Activated CD8-positive, alpha-beta T cell treated with anti-CD3 and anti-CD28 coated beads for 36 hours (primary cell): ENCODE measurements at regions of chr10 and their contacts with region 1.

Region 1: GRCh38 chr10:44932517-44933450 is 21.6 kb downstream of the TMEM72 start:
- DNase-seq: peak; percentile 93
- ATAC-seq: peak; percentile 98
- H3K4me3 Mint-ChIP-seq: no peak overlapping the region
- H3K27ac Mint-ChIP-seq: no peak overlapping the region
- H3K4me1 Mint-ChIP-seq: peaks cover 6% of the 10 kb centered on the region
- H3K27me3 Mint-ChIP-seq: no peaks in the 10 kb centered on the region
- CTCF ChIP-seq: peak; percentile 92

Region 2: DNA sequence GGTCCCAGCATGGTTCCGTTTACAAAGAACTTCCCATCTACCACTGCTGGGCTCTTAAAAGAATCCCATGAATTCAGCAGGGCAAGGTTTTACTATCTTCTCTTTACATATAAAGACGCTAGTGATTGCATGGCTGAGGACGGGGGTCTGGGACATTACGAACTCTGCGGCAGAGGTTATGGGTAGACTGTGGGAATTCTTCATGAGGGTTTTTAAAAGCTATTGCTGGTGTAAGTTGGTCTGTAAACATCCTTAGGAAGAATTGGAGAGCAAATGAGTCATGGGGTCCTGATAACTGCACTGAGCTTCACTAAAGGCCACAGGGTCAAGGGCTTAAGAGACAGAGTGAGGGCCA is 74.8 kb before region 1 on chr10:
- CTCF ChIA-PET with region 1: no interaction called
- POLR2A ChIA-PET with region 1: no interaction called
- intact Hi-C with region 1: no loop called
- DNase-seq: no peak
- ATAC-seq: no peak
- H3K4me3 Mint-ChIP-seq: no peak overlapping the region
- H3K27ac Mint-ChIP-seq: no peak overlapping the region
- H3K4me1 Mint-ChIP-seq: no peaks in the 10 kb centered on the region
- H3K27me3 Mint-ChIP-seq: peaks cover 4% of the 10 kb centered on the region
- CTCF ChIP-seq: peak; percentile 62

Region 3: GRCh38 chr10:44947371-44948152 is 14.8 kb after region 1 on chr10:
- CTCF ChIA-PET with region 1: interaction called, 20 read pairs
- POLR2A ChIA-PET with region 1: interaction called, 3 read pairs
- intact Hi-C with region 1: no loop called
- DNase-seq: no peak
- ATAC-seq: no peak
- H3K4me3 Mint-ChIP-seq: no peak overlapping the region
- H3K27ac Mint-ChIP-seq: no peak overlapping the region
- H3K4me1 Mint-ChIP-seq: peaks cover 4% of the 10 kb centered on the region
- H3K27me3 Mint-ChIP-seq: peaks cover 9% of the 10 kb centered on the region
- CTCF ChIP-seq: no peak

Region 4: GRCh38 chr10:44952779-44953231 is 20.0 kb after region 1 on chr10:
- CTCF ChIA-PET with region 1: interaction called, 20 read pairs
- POLR2A ChIA-PET with region 1: no interaction called
- intact Hi-C with region 1: no loop called
- DNase-seq: no peak
- ATAC-seq: no peak
- H3K4me3 Mint-ChIP-seq: no peak overlapping the region
- H3K27ac Mint-ChIP-seq: no peak overlapping the region
- H3K4me1 Mint-ChIP-seq: peaks cover 3% of the 10 kb centered on the region
- H3K27me3 Mint-ChIP-seq: no peaks in the 10 kb centered on the region
- CTCF ChIP-seq: no peak

Region 5: GRCh38 chr10:44962870-44963738 is 30.3 kb after region 1 on chr10:
- CTCF ChIA-PET with region 1: interaction called, 22 read pairs
- POLR2A ChIA-PET with region 1: no interaction called
- intact Hi-C with region 1: no loop called
- DNase-seq: no peak
- ATAC-seq: no peak
- H3K4me3 Mint-ChIP-seq: no peak overlapping the region
- H3K27ac Mint-ChIP-seq: no peak overlapping the region
- H3K4me1 Mint-ChIP-seq: peaks cover 34% of the 10 kb centered on the region
- H3K27me3 Mint-ChIP-seq: no peaks in the 10 kb centered on the region
- CTCF ChIP-seq: peak; percentile 24

Region 6: GRCh38 chr10:44974628-44975431 is 42.0 kb after region 1 on chr10:
- CTCF ChIA-PET with region 1: interaction called, 25 read pairs
- POLR2A ChIA-PET with region 1: no interaction called
- intact Hi-C with region 1: loop called (anchors 2 kb)
- DNase-seq: peak; percentile 68
- ATAC-seq: peak; percentile 96
- H3K4me3 Mint-ChIP-seq: peak overlapping the region; percentile 65
- H3K27ac Mint-ChIP-seq: peak overlapping the region; percentile 67
- H3K4me1 Mint-ChIP-seq: peaks cover 19% of the 10 kb centered on the region
- H3K27me3 Mint-ChIP-seq: no peaks in the 10 kb centered on the region
- CTCF ChIP-seq: peak; percentile 93

Region 7: DNA sequence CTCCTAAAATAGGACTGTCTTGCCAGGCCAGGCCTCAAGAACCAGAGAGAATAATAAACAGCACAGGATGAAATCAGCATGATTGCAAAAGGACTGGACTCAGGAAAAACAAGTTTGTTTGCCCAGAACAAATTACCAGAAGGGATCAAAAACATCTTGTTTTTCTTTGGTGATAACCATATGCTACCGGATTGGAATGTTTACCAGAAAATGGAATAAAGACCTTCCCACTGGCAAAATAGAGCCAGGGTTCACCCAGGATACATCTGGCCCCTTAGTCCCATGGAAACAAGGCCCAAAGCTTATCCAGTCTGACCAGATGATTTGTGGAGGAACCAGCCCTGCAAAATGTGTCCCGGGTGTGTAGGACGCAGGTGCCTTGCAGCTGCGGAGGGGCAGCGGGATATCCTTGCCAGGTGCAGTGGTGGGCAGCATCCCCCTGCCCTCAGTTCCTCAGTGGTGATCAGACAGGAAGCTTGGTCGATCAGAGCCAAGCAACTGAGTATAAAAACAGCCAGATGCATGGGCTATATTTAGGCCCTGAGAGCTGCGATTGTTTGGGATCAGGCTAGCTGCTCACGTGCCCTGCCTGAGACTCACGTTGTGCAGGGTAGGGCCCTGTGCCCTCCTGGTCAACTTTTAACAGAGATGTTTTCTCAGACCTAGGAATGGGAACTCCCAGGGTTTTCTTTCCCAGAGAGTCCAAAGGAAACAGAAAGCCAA is 63.3 kb after region 1 on chr10:
- CTCF ChIA-PET with region 1: interaction called, 11 read pairs
- POLR2A ChIA-PET with region 1: interaction called, 3 read pairs
- intact Hi-C with region 1: no loop called
- DNase-seq: no peak
- ATAC-seq: no peak
- H3K4me3 Mint-ChIP-seq: no peak overlapping the region
- H3K27ac Mint-ChIP-seq: no peak overlapping the region
- H3K4me1 Mint-ChIP-seq: peaks cover 32% of the 10 kb centered on the region
- H3K27me3 Mint-ChIP-seq: no peaks in the 10 kb centered on the region
- CTCF ChIP-seq: no peak

Region 8: GRCh38 chr10:45015590-45015989 is 82.8 kb after region 1 on chr10:
- CTCF ChIA-PET with region 1: no interaction called
- POLR2A ChIA-PET with region 1: no interaction called
- intact Hi-C with region 1: no loop called
- DNase-seq: no peak
- ATAC-seq: no peak
- H3K4me3 Mint-ChIP-seq: no peak overlapping the region
- H3K27ac Mint-ChIP-seq: no peak overlapping the region
- H3K4me1 Mint-ChIP-seq: no peaks in the 10 kb centered on the region
- H3K27me3 Mint-ChIP-seq: no peaks in the 10 kb centered on the region
- CTCF ChIP-seq: no peak